CD14-positive monocyte (primary cell): ENCODE measurements at regions of chr3 and their contacts with region 1.

Region 1: DNA sequence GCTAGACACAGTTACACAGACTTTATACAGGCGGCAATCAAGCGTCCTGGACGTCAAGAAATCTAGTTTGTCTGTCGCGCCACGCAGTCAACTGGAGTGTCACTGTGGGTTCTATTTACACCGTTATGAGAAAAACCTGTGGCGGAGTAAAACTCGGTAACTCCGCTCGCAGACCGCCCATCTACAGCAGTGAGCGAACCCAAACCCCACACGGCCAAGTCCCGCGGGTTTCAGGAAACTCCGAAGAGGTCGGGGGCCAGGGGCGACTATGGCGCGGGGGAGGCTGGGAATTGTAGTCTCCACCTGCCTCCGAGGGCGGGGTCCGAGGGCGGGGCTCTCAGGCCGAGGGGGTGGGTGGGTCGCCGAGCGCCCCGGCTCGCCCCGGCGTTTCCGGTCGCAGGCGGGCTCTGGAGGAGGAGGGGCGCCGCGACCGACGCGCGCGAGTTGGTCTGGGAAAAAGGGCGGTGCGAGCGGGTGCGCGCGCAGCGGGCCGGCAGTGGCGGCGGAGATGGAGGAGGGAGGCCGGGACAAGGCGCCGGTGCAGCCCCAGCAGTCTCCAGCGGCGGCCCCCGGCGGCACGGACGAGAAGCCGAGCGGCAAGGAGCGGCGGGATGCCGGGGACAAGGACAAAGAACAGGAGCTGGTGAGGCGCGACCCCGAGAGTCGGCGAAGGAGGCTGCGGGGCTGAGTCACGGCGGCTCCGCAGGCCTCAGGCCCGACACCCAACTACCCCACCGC is at the start of gene PSMD2:
- DNase-seq: peak; percentile 94 to 95 (median 95)
- H3K4me3 ChIP-seq: peak within 1 kb of the TSS; percentile 82 to 90 (median 83)
- H3K4me3 Mint-ChIP-seq: peak within 1 kb of the TSS; percentile 91 to 97
- H3K27ac ChIP-seq: peak within 1 kb of the TSS; percentile 53 to 71
- H3K27ac Mint-ChIP-seq: peak within 1 kb of the TSS; percentile 86 to 95 (median 91)
- H3K4me1 ChIP-seq: peaks cover 16 to 19% of the 10 kb centered on the region in 2 donors
- H3K4me1 Mint-ChIP-seq: peaks cover 21% of the 10 kb centered on the region
- H3K27me3 ChIP-seq: no peaks in the 10 kb centered on the region
- H3K27me3 Mint-ChIP-seq: peaks cover 0 to 3% (median 0%) of the 10 kb centered on the region in 3 donors
- CTCF ChIP-seq: no peak
- polyA plus RNA-seq, gene PSMD2: 138 to 186 (median 167) TPM

Region 2: DNA sequence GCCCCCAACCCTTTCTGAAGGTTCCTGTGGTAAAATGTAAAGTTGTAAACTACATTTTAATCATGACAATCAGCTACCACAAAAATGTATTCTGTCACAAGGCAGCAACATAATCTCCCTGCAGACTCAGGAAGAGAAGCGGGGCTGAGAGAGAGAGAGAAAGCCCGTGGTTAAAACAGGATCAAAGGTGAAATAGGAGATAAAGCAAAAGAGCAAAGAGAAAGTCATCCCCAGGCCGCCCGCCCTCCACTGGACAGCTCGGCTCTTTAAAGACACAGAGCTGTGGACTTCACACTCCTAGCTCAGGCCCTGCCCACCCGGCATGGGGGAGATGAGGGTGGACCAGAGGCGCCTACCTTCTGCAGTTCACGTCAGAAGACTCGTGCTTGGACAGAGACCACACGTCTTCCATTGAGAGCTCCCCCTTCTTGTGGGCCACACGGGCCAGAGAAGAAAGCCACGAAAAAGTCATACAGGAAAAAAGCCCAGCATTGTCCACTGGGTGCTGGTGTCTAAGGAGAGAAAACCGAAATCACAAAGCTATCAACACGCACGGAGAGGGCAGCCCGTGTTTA is 310.6 kb before region 1 on chr3:
- intact Hi-C with region 1: no loop called
- DNase-seq: no peak
- H3K4me3 ChIP-seq: no peak overlapping the region
- H3K4me3 Mint-ChIP-seq: no peak overlapping the region
- H3K27ac ChIP-seq: no peak overlapping the region
- H3K27ac Mint-ChIP-seq: no peak overlapping the region
- H3K4me1 ChIP-seq: no peaks in the 10 kb centered on the region
- H3K4me1 Mint-ChIP-seq: peaks cover 2% of the 10 kb centered on the region
- H3K27me3 ChIP-seq: no peaks in the 10 kb centered on the region
- H3K27me3 Mint-ChIP-seq: peaks cover 0 to 2% (median 0%) of the 10 kb centered on the region in 3 donors
- CTCF ChIP-seq: no peak

Region 3: DNA sequence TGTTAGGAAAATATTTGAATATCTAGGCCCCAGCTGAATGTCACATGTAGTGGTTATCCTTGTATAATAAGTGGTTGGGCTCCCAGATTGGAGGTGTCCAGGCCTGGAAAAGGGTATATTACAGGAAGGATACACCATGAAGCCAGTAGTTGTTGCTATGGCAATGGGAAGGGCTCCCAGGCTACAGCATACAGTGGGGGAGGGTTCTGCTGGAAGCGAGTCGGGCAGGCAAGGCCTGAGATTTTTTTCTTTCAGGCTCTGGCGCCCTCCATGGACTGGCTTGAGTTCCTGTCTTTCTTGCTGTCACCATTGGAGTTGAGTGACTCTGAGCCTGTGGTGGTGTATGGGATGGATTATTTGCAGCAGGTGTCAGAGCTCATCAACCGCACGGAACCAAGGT is 14.2 kb before region 1 on chr3:
- intact Hi-C with region 1: no loop called
- DNase-seq: no peak
- H3K4me3 ChIP-seq: no peak overlapping the region
- H3K4me3 Mint-ChIP-seq: peak overlapping the region in 1 of 2 donors; percentile 42
- H3K27ac ChIP-seq: no peak overlapping the region
- H3K27ac Mint-ChIP-seq: peak overlapping the region in 3 of 7 donors; percentile 25 to 42 (median 31)
- H3K4me1 ChIP-seq: peaks cover 10 to 12% of the 10 kb centered on the region in 2 donors
- H3K4me1 Mint-ChIP-seq: peaks cover 20% of the 10 kb centered on the region
- H3K27me3 ChIP-seq: peaks cover 0 to 3% of the 10 kb centered on the region in 2 donors
- H3K27me3 Mint-ChIP-seq: peaks cover 10 to 37% (median 33%) of the 10 kb centered on the region in 3 donors
- CTCF ChIP-seq: peak; percentile 19

Region 4: DNA sequence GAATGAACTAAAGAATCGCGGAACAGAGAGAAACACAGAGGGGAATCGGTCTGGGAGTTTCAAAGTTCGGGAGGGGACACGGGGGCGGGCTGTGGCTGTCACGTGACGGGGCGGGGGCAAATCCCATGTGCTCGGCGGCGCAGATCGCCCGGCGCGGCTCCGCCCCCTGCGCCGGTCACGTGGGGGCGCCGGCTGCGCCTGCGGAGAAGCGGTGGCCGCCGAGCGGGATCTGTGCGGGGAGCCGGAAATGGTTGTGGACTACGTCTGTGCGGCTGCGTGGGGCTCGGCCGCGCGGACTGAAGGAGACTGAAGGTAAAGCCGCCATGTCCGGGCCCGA is 15.4 kb after region 1 on chr3 and contains the start of gene EIF4G1:
- intact Hi-C with region 1: loop called in 1 of 2 experiments (anchors 2 kb)
- DNase-seq: peak; percentile 89 to 96 (median 91)
- H3K4me3 ChIP-seq: peak within 1 kb of the TSS; percentile 91 to 94 (median 93)
- H3K4me3 Mint-ChIP-seq: peak within 1 kb of the TSS; percentile 89 to 93
- H3K27ac ChIP-seq: peak within 1 kb of the TSS; percentile 91 to 94
- H3K27ac Mint-ChIP-seq: peak within 1 kb of the TSS; percentile 82 to 97 (median 93)
- H3K4me1 ChIP-seq: peaks cover 48 to 52% of the 10 kb centered on the region in 2 donors
- H3K4me1 Mint-ChIP-seq: peaks cover 32% of the 10 kb centered on the region
- H3K27me3 ChIP-seq: no peaks in the 10 kb centered on the region
- H3K27me3 Mint-ChIP-seq: peaks cover 0 to 3% (median 0%) of the 10 kb centered on the region in 3 donors
- CTCF ChIP-seq: no peak
- polyA plus RNA-seq, gene EIF4G1: 13.9 to 119 (median 24.2) TPM

Region 5: GRCh38 chr3:184345317-184346144 is 46.6 kb after region 1 on chr3:
- intact Hi-C with region 1: no loop called
- DNase-seq: peak; percentile 19 to 50 (median 26)
- H3K4me3 ChIP-seq: no peak overlapping the region
- H3K4me3 Mint-ChIP-seq: no peak overlapping the region
- H3K27ac ChIP-seq: no peak overlapping the region
- H3K27ac Mint-ChIP-seq: peak overlapping the region in 6 of 7 donors; percentile 12 to 77 (median 45)
- H3K4me1 ChIP-seq: peaks cover 6 to 8% of the 10 kb centered on the region in 2 donors
- H3K4me1 Mint-ChIP-seq: peaks cover 17% of the 10 kb centered on the region
- H3K27me3 ChIP-seq: no peaks in the 10 kb centered on the region
- H3K27me3 Mint-ChIP-seq: peaks cover 0 to 3% (median 1%) of the 10 kb centered on the region in 3 donors
- CTCF ChIP-seq: peak; percentile 61